ENCODE measurements at regions of chr11 and their contacts with region 1.

Region 1: DNA sequence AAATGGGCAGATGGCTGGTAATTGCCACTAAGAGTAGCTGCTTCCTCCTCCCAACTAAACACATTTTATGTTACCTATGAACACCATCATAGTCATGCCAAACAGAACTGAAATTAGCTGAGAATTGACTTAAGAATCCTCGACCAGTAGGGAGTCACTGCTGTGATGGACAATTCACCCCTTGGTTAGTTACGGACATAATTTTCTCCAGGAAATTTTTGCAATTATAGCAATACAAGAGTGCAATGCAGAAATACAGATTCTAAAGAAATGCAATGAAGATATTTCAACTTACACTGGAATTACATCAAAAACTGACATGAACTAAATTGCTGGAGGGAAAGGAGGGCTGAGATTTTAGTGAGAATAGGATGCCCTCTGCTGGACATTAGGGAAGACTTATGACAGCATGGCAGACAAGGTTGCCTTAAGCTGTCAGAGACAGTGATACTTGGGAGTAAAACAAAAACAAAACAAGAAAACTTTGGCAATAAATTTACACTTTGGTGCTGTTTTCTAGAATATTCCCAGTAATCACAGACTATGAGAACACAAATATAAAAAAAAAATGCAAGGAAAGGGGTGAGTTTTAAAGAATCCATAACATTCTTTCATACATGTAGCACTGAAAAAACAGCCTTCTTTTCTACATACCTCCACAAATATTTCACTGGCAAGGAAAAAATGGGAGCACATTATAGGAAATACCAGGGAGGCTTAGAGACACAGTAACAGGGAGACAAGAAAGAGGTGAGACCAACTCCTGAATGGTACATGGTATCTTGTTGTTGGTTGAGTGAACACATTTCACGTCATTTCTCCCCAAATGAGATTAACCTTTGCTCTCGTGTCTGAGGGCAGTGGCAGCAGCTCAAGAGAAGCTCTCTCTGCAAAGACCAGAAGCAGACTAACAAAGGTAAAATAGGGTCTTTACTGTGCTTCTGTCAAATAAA is 11.2 kb upstream of the PPP2R1B start:
- DNase-seq: peak; percentile 82
- ATAC-seq: peak; percentile 96
- H3K4me3 ChIP-seq: no peak overlapping the region
- H3K27ac ChIP-seq: no peak overlapping the region
- H3K4me1 ChIP-seq: peaks cover 4% of the 10 kb centered on the region
- H3K27me3 ChIP-seq: no peaks in the 10 kb centered on the region
- CTCF ChIP-seq: peak; percentile 87
- POLR2A ChIP-seq: no peak
- RAD21 ChIP-seq: peak; percentile 91

Region 2: GRCh38 chr11:111454561-111455192 is 322.7 kb before region 1 on chr11:
- CTCF ChIA-PET with region 1: interaction called, 4 read pairs
- POLR2A ChIA-PET with region 1: no interaction called
- dilution Hi-C with region 1: no loop called
- in situ Hi-C with region 1: loop called (anchors 10 kb)
- intact Hi-C with region 1: loop called (anchors 5 kb)
- DNase-seq: peak; percentile 73
- ATAC-seq: peak; percentile 90
- H3K4me3 ChIP-seq: no peak overlapping the region
- H3K27ac ChIP-seq: peak overlapping the region; percentile 26
- H3K4me1 ChIP-seq: peaks cover 5% of the 10 kb centered on the region
- H3K27me3 ChIP-seq: peaks cover 2% of the 10 kb centered on the region; the same call in 1 of the 2 replicates
- CTCF ChIP-seq: peak; percentile 56
- POLR2A ChIP-seq: no peak
- RAD21 ChIP-seq: peak; percentile 72

Region 3: DNA sequence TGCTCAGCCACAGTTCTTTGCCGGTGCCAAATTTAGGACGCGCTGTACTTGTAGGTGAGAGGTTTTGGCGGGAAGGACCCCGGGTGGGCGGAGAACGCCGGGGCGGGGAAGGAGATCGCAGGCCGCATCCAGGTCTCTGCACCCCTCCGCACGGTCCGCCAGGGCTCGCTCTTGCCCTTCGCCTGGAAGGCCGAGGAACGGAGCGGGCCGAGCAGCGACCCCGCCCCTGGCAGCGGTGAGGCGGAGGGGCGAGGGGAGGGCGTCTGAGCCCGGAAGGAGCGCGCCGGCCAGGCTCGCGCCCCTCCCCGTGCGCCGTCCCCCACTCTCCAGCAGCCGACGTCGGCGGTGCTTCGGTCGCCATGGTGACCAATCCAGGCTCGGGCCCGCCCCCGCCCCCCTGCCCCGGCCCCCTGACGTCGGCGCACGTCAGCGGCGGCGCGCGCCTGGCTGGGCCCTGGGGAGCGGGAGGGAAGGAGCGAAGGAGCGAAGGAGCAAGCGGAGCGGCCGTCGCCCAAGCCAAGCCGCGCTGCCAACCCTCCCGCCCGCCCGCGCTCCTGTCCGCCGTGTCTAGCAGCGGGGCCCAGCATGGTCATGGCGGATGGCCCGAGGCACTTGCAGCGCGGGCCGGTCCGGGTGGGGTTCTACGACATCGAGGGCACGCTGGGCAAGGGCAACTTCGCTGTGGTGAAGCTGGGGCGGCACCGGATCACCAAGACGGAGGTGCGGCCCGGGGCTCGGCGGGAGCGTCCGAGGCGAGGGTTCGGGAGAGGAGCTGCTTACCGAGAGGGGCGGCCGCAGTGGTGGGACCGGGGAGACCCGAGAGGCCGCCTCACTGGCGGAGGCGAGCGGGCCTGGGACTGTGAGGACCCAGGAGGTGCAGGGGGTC is 175.1 kb before region 1 on chr11 and contains the start of gene SIK2:
- CTCF ChIA-PET with region 1: interaction called, 13 read pairs
- POLR2A ChIA-PET with region 1: no interaction called
- dilution Hi-C with region 1: no loop called
- in situ Hi-C with region 1: loop called (anchors 5 kb)
- intact Hi-C with region 1: loop called (anchors 1 kb)
- DNase-seq: peak; percentile 94
- ATAC-seq: peak; percentile 94
- H3K4me3 ChIP-seq: peak within 1 kb of the TSS; percentile 94
- H3K27ac ChIP-seq: peak within 1 kb of the TSS; percentile 97
- H3K4me1 ChIP-seq: peaks cover 3% of the 10 kb centered on the region; the same call in 1 of the 2 replicates
- H3K27me3 ChIP-seq: no peaks in the 10 kb centered on the region
- CTCF ChIP-seq: peak; percentile 98
- POLR2A ChIP-seq: peak; percentile 83
- RAD21 ChIP-seq: peak; percentile 99
- total RNA-seq, gene SIK2: 7.9 and 8.6 TPM in 2 replicates

Region 4: GRCh38 chr11:111684251-111684650 is 93.1 kb before region 1 on chr11:
- CTCF ChIA-PET with region 1: no interaction called
- POLR2A ChIA-PET with region 1: no interaction called
- dilution Hi-C with region 1: no loop called
- in situ Hi-C with region 1: no loop called
- intact Hi-C with region 1: no loop called
- DNase-seq: no peak
- ATAC-seq: no peak
- H3K4me3 ChIP-seq: no peak overlapping the region
- H3K27ac ChIP-seq: no peak overlapping the region
- H3K4me1 ChIP-seq: peaks cover 4% of the 10 kb centered on the region
- H3K27me3 ChIP-seq: no peaks in the 10 kb centered on the region
- CTCF ChIP-seq: no peak
- POLR2A ChIP-seq: no peak
- RAD21 ChIP-seq: no peak

Region 5: GRCh38 chr11:111819161-111819828 is 41.9 kb after region 1 on chr11:
- CTCF ChIA-PET with region 1: interaction called, 3 read pairs
- POLR2A ChIA-PET with region 1: no interaction called
- dilution Hi-C with region 1: no loop called
- in situ Hi-C with region 1: no loop called
- intact Hi-C with region 1: loop called (anchors 5 kb)
- DNase-seq: peak; percentile 82
- ATAC-seq: peak; percentile 76
- H3K4me3 ChIP-seq: no peak overlapping the region
- H3K27ac ChIP-seq: peak overlapping the region; percentile 18; the same call in 1 of the 2 replicates
- H3K4me1 ChIP-seq: peaks cover 14% of the 10 kb centered on the region
- H3K27me3 ChIP-seq: no peaks in the 10 kb centered on the region
- CTCF ChIP-seq: no peak
- POLR2A ChIP-seq: no peak
- RAD21 ChIP-seq: no peak

Measured in IMR-90 (cell line).